A549 (cell line): ENCODE measurements at regions of chr18 and their contacts with region 1.

Region 1: GRCh38 chr18:24726727-24727492 is 266.5 kb downstream of the HRH4 start:
- DNase-seq: peak; percentile 4 to 70
- ATAC-seq: peak; percentile 71 to 72; a peak in 5 of 6 replicates
- H3K4me3 ChIP-seq: no peak overlapping the region
- H3K27ac ChIP-seq: no peak overlapping the region
- H3K4me1 ChIP-seq: no peaks in the 10 kb centered on the region
- CTCF ChIP-seq: peak; percentile 69
- EP300 ChIP-seq: no peak
- POLR2A ChIP-seq: no peak
- RAD21 ChIP-seq: peak; percentile 62 to 72

Region 2: GRCh38 chr18:24488824-24489493 is 238.0 kb before region 1 on chr18:
- CTCF ChIA-PET with region 1: interaction called, 22 read pairs
- POLR2A ChIA-PET with region 1: no interaction called
- DNase-seq: peak; percentile 18 to 21
- ATAC-seq: peak in 1 of 2 experiments; percentile 55; a peak in 2 of 6 replicates
- H3K4me3 ChIP-seq: no peak overlapping the region
- H3K27ac ChIP-seq: no peak overlapping the region
- H3K4me1 ChIP-seq: no peaks in the 10 kb centered on the region
- CTCF ChIP-seq: peak; percentile 55
- EP300 ChIP-seq: no peak
- POLR2A ChIP-seq: no peak
- RAD21 ChIP-seq: peak; percentile 55 to 61

Region 3: DNA sequence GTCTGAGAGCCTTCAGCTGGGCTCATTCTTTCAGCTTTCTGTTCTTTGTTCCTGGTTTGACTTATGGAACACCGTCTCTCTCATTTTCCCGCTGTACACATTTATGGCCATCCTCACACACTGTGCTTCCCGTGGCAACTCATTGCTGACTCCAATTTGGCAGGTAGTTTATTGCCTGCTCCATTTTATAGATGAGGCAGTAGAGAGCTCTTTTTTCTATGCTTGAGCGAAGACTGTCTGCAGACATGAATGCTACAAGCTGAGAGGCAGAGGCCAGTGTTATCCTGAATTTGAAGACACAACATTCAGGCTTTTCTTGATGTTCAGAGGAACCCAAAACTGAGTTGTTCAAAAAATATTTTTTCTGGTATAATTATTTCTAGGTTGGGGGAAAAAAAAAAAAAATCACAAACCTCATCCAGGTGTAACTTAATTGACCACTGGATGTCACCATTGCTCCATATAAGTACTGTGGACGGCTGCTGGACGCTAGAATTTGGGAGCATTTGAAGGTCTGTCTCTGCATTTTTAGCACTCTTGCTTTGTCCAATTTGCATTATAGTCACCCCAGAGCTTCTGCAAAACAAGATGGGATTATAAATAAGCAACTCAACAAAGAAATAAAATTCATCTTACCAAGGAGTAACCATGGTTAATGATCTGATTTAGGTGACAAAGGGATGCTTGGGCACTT is 183.0 kb before region 1 on chr18:
- CTCF ChIA-PET with region 1: interaction called, 43 read pairs
- POLR2A ChIA-PET with region 1: no interaction called
- DNase-seq: peak; percentile 11 to 19
- ATAC-seq: peak in 1 of 2 experiments; percentile 44; a peak in 2 of 6 replicates
- H3K4me3 ChIP-seq: no peak overlapping the region
- H3K27ac ChIP-seq: no peak overlapping the region
- H3K4me1 ChIP-seq: no peaks in the 10 kb centered on the region
- CTCF ChIP-seq: peak; percentile 59
- EP300 ChIP-seq: no peak
- POLR2A ChIP-seq: no peak
- RAD21 ChIP-seq: peak; percentile 63 to 66

Region 4: DNA sequence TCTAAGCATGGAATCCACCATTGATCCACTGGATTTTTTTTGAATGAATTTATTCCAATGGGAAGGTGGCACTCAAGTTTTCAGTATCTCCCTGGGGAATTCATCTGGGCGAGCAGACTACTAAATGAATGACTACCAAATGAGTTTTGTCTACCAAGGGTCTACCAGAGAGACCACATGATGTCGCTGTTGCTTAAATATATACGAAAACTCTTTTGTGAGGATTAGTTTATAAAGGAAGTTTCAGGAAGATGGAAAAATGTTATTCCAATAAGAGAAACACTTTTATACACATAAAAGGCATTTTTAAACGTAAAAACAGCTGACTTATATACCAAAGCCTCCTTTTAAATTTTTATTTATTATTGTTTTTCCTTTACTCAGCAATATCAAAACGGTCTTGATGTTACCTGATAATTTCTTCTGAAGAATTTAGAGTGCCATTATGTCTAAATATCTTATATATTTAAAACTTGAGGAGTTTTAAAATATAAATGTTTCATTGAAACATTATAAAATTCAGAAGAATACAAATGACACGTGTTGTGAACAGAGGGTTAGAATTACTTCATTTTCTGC is 126.7 kb before region 1 on chr18:
- CTCF ChIA-PET with region 1: interaction called, 15 read pairs
- POLR2A ChIA-PET with region 1: no interaction called
- DNase-seq: peak; percentile 3 to 41
- ATAC-seq: peak in 1 of 2 experiments; percentile 48; a peak in 2 of 6 replicates
- H3K4me3 ChIP-seq: no peak overlapping the region
- H3K27ac ChIP-seq: no peak overlapping the region
- H3K4me1 ChIP-seq: no peaks in the 10 kb centered on the region
- CTCF ChIP-seq: peak; percentile 51
- EP300 ChIP-seq: no peak
- POLR2A ChIP-seq: no peak
- RAD21 ChIP-seq: peak; percentile 47 to 50; a peak in 4 of 5 replicates

Region 5: DNA sequence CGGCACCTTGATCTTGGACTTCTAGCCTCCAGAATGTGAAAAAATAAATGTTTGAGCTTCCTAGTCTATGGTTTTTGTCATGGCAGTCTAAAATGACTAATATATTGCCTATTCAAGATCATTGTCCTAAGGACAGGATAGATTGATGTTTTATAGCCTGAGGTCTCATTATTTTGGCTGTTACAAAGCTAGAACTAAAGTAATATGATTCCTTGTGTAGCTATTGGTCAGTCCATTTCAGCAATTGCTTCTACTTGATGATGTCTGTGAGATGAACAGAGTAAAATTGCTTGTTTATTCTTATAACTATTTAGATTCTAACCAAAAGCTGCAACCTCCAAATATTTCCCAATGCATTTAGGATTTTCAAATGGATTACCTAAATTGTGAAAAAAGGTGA is 121.5 kb before region 1 on chr18:
- CTCF ChIA-PET with region 1: interaction called, 15 read pairs
- POLR2A ChIA-PET with region 1: no interaction called
- DNase-seq: no peak
- ATAC-seq: no peak
- H3K4me3 ChIP-seq: no peak overlapping the region
- H3K27ac ChIP-seq: no peak overlapping the region
- H3K4me1 ChIP-seq: no peaks in the 10 kb centered on the region
- CTCF ChIP-seq: no peak
- EP300 ChIP-seq: no peak
- POLR2A ChIP-seq: no peak
- RAD21 ChIP-seq: no peak